ENCODE measurements at regions of chr14 and their contacts with region 1.

Region 1: GRCh38 chr14:75709207-75709812 is 48.3 kb downstream of the TTLL5 start:
- DNase-seq: peak; percentile 65 to 80
- ATAC-seq: peak; percentile 68 to 82; a peak in 5 of 6 replicates
- H3K4me3 ChIP-seq: no peak overlapping the region
- H3K27ac ChIP-seq: no peak overlapping the region
- H3K4me1 ChIP-seq: peaks cover 21% of the 10 kb centered on the region
- CTCF ChIP-seq: peak; percentile 82
- EP300 ChIP-seq: no peak
- POLR2A ChIP-seq: no peak
- RAD21 ChIP-seq: peak; percentile 77 to 82

Region 2: DNA sequence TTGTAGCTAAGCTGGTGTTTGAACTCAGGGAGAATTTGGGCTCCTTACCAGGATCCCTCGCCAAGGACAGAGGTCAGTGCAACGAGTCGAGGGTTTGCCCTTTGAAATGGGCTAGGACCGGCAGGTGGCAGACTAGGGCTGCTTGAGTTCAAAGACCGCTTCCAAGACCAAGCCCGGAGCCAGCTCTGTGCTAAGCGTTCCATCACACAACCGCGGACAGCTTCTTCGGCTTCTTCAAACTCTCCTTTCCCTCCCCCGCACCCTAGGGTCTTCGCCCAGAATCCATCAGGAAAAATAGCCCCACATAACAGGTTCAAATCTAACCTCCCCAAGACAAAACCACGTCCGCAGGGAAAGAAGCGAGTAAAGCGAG is 131.6 kb before region 1 on chr14:
- CTCF ChIA-PET with region 1: interaction called, 13 read pairs
- POLR2A ChIA-PET with region 1: interaction called, 3 read pairs
- DNase-seq: peak; percentile 86 to 90
- ATAC-seq: peak; percentile 90 to 96
- H3K4me3 ChIP-seq: peak overlapping the region; percentile 53
- H3K27ac ChIP-seq: peak overlapping the region; percentile 75 to 79
- H3K4me1 ChIP-seq: peaks cover 8% of the 10 kb centered on the region
- CTCF ChIP-seq: peak; percentile 86
- EP300 ChIP-seq: no peak
- POLR2A ChIP-seq: no peak
- RAD21 ChIP-seq: peak; percentile 92 to 93

Region 3: DNA sequence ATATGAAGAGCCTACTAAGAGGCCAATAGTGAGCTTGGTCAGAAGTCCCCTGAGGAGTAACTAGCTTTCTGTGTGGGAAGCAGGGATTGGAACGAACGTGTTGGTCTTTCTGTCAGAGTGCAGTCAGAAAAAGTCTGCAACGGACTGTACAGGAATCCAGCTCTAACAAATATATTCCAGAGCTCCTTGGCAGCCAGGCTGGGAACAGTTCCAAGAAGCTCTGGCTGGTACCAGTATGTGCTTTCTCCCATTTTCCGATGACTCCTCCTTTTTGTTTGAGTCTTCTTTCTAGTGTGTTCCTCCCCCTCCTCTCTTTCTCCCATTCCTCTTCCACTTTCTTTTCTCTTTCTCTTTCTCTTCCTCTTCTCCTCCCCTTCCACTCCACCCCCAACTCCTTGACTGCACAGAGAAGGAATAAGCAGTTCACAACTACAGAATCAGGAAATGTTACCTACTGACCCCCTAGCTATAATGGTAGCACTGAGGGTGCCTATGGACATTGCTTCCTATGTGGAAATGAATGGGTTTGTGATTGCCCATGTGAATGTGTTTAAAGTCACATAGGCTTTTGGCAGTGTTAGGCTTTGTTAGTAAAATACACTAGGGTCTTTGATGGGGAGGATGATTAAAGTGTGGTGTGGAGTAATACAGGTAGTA is 11.7 kb after region 1 on chr14:
- CTCF ChIA-PET with region 1: interaction called, 28 read pairs
- POLR2A ChIA-PET with region 1: no interaction called
- DNase-seq: no peak
- ATAC-seq: no peak
- H3K4me3 ChIP-seq: no peak overlapping the region
- H3K27ac ChIP-seq: no peak overlapping the region
- H3K4me1 ChIP-seq: peaks cover 7% of the 10 kb centered on the region
- CTCF ChIP-seq: no peak
- EP300 ChIP-seq: no peak
- POLR2A ChIP-seq: no peak
- RAD21 ChIP-seq: no peak

Region 4: GRCh38 chr14:75906676-75907280 is 197.5 kb after region 1 on chr14:
- CTCF ChIA-PET with region 1: interaction called, 25 read pairs
- POLR2A ChIA-PET with region 1: no interaction called
- DNase-seq: peak; percentile 48 to 54
- ATAC-seq: peak; percentile 54 to 71; a peak in 3 of 6 replicates
- H3K4me3 ChIP-seq: no peak overlapping the region
- H3K27ac ChIP-seq: no peak overlapping the region
- H3K4me1 ChIP-seq: no peaks in the 10 kb centered on the region
- CTCF ChIP-seq: peak; percentile 89
- EP300 ChIP-seq: no peak
- POLR2A ChIP-seq: no peak
- RAD21 ChIP-seq: peak; percentile 58 to 60

Region 5: GRCh38 chr14:75968456-75968855 is 259.1 kb after region 1 on chr14:
- CTCF ChIA-PET with region 1: interaction called, 448 read pairs
- POLR2A ChIA-PET with region 1: no interaction called
- DNase-seq: no peak
- ATAC-seq: no peak
- H3K4me3 ChIP-seq: no peak overlapping the region
- H3K27ac ChIP-seq: no peak overlapping the region
- H3K4me1 ChIP-seq: no peaks in the 10 kb centered on the region
- CTCF ChIP-seq: no peak
- EP300 ChIP-seq: no peak
- POLR2A ChIP-seq: no peak
- RAD21 ChIP-seq: no peak

Region 6: GRCh38 chr14:75995372-75996041 is 286.2 kb after region 1 on chr14:
- CTCF ChIA-PET with region 1: interaction called, 22 read pairs
- POLR2A ChIA-PET with region 1: no interaction called
- DNase-seq: no peak
- ATAC-seq: no peak
- H3K4me3 ChIP-seq: no peak overlapping the region
- H3K27ac ChIP-seq: no peak overlapping the region
- H3K4me1 ChIP-seq: no peaks in the 10 kb centered on the region
- CTCF ChIP-seq: no peak
- EP300 ChIP-seq: no peak
- POLR2A ChIP-seq: no peak
- RAD21 ChIP-seq: no peak

Measured in A549 (cell line).